ENCODE measurements at regions of chr18 and their contacts with region 1.

Region 1: DNA sequence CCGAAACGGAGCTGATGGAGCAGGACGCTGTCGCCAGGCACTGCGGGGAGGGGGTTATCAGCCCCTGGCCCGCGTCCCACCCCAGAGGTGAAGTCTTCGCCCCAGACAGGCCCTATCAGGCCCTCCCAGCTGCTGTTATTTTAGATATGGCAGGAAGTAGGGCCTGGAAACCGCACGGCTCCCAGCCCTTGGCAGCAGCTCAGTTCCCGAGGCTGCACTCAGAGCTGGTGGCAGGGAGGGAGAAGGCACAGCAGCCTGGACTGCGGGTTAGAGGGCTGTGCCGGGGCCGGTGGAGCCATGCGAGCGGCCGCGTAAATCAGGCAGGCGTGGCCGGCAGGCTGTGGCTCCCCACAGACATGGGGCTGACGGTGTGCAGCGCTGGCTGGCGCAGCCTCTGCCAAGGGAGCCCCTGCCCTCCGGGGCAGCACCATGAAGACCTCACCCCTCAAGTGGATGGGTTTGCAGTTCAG is 111.4 kb downstream of the NFATC1 start:
- DNase-seq: peak; percentile 52 to 66
- ATAC-seq: peak; percentile 79 to 85
- H3K4me3 ChIP-seq: peak overlapping the region; percentile 49 to 65 (median 54)
- H3K27ac ChIP-seq: peak overlapping the region; percentile 88 to 90 (median 90)
- H3K4me1 ChIP-seq: peaks cover 23 to 32% of the 10 kb centered on the region in 2 donors
- H3K27me3 ChIP-seq: no peaks in the 10 kb centered on the region
- CTCF ChIP-seq: no peak
- POLR2A ChIP-seq: no peak

Region 2: GRCh38 chr18:79393635-79394533 is 113.2 kb before region 1 on chr18:
- in situ Hi-C with region 1: no loop called
- intact Hi-C with region 1: loop called (anchors 1 kb)
- DNase-seq: peak; percentile 57 to 77
- ATAC-seq: peak; percentile 72 to 75
- H3K4me3 ChIP-seq: peak overlapping the region; percentile 65 to 76 (median 68)
- H3K27ac ChIP-seq: peak overlapping the region; percentile 93 to 97 (median 96)
- H3K4me1 ChIP-seq: peaks cover 19 to 22% of the 10 kb centered on the region in 2 donors
- H3K27me3 ChIP-seq: no peaks in the 10 kb centered on the region
- CTCF ChIP-seq: no peak
- POLR2A ChIP-seq: peak; percentile 79 to 94

Region 3: DNA sequence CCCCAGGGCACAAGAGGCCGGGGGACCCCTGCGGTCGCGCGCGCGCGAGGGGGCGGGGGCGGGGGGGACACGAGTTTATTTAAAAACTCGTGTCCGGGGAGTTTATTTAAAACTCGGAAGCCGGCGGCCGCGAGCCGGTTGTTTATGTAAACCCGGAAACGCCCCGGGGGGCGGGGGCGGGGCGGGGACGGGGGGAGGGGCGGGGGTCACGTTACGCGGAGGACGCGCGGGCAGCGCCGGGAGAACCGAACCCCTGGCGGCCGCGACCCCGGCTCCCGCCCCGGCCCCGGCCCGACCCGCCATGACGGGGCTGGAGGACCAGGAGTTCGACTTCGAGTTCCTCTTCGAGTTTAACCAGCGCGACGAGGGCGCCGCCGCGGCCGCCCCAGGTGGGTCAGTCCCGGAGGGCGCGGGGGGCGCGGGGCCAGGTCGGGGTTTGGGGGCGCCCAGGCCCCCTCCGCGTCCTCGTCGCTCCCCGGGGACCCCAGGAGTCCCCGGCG is 107.0 kb before region 1 on chr18:
- in situ Hi-C with region 1: loop called in 2 of 4 experiments (anchors 10 kb)
- intact Hi-C with region 1: no loop called
- DNase-seq: peak; percentile 62 to 78
- ATAC-seq: peak; percentile 15
- H3K4me3 ChIP-seq: peak overlapping the region; percentile 70 to 95 (median 79)
- H3K27ac ChIP-seq: peak overlapping the region; percentile 88 to 99 (median 94)
- H3K4me1 ChIP-seq: peaks cover 47 to 60% of the 10 kb centered on the region in 2 donors
- H3K27me3 ChIP-seq: no peaks in the 10 kb centered on the region
- CTCF ChIP-seq: no peak
- POLR2A ChIP-seq: peak; percentile 56 to 57

Region 4: GRCh38 chr18:79439201-79440023 is 67.7 kb before region 1 on chr18:
- in situ Hi-C with region 1: no loop called
- intact Hi-C with region 1: loop called (anchors 5 kb)
- DNase-seq: peak; percentile 71 to 86
- ATAC-seq: peak; percentile 85 to 86
- H3K4me3 ChIP-seq: peak overlapping the region; percentile 9 to 34 (median 24)
- H3K27ac ChIP-seq: peak overlapping the region; percentile 81 to 86 (median 84)
- H3K4me1 ChIP-seq: peaks cover 26 to 51% of the 10 kb centered on the region in 2 donors
- H3K27me3 ChIP-seq: no peaks in the 10 kb centered on the region
- CTCF ChIP-seq: no peak
- POLR2A ChIP-seq: peak in 1 of 2 donors; percentile 26

Region 5: GRCh38 chr18:79453816-79454735 is 53.0 kb before region 1 on chr18:
- in situ Hi-C with region 1: no loop called
- intact Hi-C with region 1: no loop called
- DNase-seq: peak in 1 of 2 donors; percentile 33
- ATAC-seq: peak in 1 of 2 donors; percentile 43
- H3K4me3 ChIP-seq: no peak overlapping the region
- H3K27ac ChIP-seq: peak overlapping the region in 3 of 4 donors; percentile 25 to 58 (median 38)
- H3K4me1 ChIP-seq: peaks cover 3 to 5% of the 10 kb centered on the region in 2 donors
- H3K27me3 ChIP-seq: no peaks in the 10 kb centered on the region
- CTCF ChIP-seq: no peak
- POLR2A ChIP-seq: no peak

Region 6: DNA sequence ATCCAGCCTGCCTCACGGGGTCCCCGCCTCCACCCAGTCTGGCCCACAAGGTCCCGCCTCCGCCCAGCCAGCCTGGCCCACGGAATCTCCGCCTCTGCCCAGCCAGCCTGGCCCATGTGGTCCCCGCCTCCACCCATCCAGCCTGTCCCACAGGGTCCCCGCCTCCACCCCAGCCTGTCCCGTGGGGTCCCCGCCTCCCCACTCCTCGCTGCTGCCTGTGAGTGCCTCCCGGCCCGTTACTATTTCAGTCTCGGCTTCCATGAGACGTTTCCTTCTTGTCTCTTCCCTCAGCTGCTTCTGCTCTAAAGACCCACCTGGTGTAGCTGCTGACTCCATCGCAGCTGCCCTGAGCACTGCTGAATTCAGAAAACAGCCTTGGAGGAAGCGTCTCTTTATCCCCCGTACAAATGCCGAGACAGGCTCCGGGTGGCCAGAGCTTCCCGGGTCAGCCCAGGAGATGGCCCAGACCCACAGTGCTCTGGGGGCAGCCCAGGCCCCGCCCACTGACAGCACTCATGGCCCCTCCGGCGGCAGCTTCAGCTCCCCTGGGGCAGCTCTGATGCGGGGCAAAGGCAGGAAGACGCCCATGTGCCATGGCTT is 41.6 kb before region 1 on chr18:
- in situ Hi-C with region 1: no loop called
- intact Hi-C with region 1: no loop called
- DNase-seq: no peak
- ATAC-seq: peak; percentile 24 to 26
- H3K4me3 ChIP-seq: peak overlapping the region in 1 of 4 donors; percentile 29
- H3K27ac ChIP-seq: peak overlapping the region; percentile 15 to 58 (median 50)
- H3K4me1 ChIP-seq: peaks cover 8 to 13% of the 10 kb centered on the region in 2 donors
- H3K27me3 ChIP-seq: no peaks in the 10 kb centered on the region
- CTCF ChIP-seq: no peak
- POLR2A ChIP-seq: no peak

Region 7: DNA sequence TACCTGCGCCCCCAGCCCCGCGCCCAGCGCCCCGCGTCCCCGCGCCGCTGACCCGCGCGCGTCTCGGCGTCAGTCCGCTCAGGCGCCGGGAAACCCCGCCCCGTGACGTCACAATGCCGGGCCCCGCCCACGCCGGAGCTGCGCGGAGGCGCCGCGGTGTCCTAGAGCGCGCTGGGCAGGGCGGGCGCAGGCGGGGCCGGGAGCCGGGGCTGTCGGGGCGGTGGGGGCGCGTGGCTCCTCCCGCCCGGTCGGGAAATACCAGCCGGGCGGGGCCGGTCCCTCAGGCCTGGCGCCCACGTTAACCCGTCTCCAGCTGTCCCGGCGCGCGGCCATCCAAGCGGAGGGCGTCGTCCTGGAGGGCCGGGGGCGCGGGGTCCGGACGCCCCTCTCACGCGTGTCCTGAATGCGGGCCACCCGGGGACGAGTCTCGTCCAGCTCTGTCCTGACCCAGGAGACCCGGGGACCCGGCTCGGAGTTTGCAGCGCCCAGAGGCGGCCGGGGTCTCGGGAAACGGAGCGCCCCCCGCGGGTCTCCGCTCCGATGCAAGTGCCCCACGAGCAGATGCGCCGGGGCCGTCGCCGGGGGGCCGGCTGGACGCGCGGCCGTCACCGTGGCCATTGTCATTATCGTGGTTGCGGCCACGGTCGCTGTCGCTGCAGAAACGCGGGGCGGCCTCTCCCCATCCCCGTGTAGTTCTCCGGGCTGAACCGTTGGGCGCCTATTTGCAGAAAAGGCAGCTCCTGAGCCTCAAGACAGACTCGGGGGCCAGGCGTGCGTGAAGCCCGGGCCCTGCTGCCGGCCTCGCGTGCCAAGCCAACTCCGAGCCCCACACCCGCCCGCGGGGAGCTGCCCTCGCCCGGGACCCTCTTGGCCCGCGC is 444.7 kb after region 1 on chr18 and contains the start of gene SLC66A2:
- in situ Hi-C with region 1: no loop called
- intact Hi-C with region 1: no loop called
- DNase-seq: peak; percentile 81 to 85
- ATAC-seq: peak; percentile 68 to 80
- H3K4me3 ChIP-seq: peak within 1 kb of the TSS; percentile 75 to 97 (median 92)
- H3K27ac ChIP-seq: peak within 1 kb of the TSS; percentile 88 to 96 (median 92)
- H3K4me1 ChIP-seq: peaks cover 28 to 41% of the 10 kb centered on the region in 2 donors
- H3K27me3 ChIP-seq: no peaks in the 10 kb centered on the region
- CTCF ChIP-seq: peak in 2 of 5 experiments; percentile 4 to 17
- POLR2A ChIP-seq: peak; percentile 93 to 95
- total RNA-seq, gene SLC66A2: 43.3 to 121 (median 107) TPM

Measured in gastrocnemius medialis (tissue), 4 donors.